Activated CD8-positive, alpha-beta T cell treated with anti-CD3 and anti-CD28 coated beads, Interleukin-2, amount 10 ng/mL, durations not matched to agents 7 days and 5 days (primary cell): ENCODE measurements at regions of chr11 and their contacts with region 1.

Region 1: GRCh38 chr11:76152086-76152681 is 54.1 kb downstream of the WNT11 start:
- DNase-seq: peak; percentile 88
- ATAC-seq: peak; percentile 95
- H3K4me3 Mint-ChIP-seq: peak overlapping the region; percentile 73
- H3K27ac Mint-ChIP-seq: peak overlapping the region; percentile 37
- H3K4me1 Mint-ChIP-seq: peaks cover 26% of the 10 kb centered on the region
- H3K27me3 Mint-ChIP-seq: peaks cover 7% of the 10 kb centered on the region

Region 2: DNA sequence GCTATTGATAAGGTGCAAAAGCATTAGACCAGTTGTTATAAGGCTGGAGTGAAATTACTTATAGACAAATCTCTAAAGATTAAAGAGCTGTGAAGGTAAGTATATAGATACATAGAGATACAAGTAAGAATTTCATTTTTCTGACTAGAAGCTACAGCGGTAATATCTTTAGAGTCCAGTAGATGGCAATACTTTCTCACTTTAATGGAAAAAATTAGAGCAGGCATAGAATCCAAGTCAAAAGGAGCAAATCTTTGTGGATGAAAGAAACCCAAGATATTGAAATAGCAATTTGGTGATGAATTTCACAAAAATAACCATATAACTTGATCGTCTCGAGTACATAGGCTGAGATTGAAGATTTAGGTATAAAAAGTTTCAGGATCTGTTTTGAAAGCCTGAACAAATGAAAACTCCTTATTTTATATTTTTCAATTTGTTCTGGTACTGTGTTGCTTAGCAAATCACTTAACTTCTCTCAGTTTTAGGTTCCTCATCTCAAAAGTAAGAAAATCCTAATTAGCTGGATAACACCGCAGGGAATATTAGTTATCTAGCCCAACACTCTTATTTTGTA is 255.3 kb before region 1 on chr11:
- CTCF ChIA-PET with region 1: interaction called, 148 read pairs
- POLR2A ChIA-PET with region 1: no interaction called
- DNase-seq: no peak
- ATAC-seq: no peak
- H3K4me3 Mint-ChIP-seq: no peak overlapping the region
- H3K27ac Mint-ChIP-seq: no peak overlapping the region
- H3K4me1 Mint-ChIP-seq: peaks cover 2% of the 10 kb centered on the region
- H3K27me3 Mint-ChIP-seq: no peaks in the 10 kb centered on the region

Region 3: DNA sequence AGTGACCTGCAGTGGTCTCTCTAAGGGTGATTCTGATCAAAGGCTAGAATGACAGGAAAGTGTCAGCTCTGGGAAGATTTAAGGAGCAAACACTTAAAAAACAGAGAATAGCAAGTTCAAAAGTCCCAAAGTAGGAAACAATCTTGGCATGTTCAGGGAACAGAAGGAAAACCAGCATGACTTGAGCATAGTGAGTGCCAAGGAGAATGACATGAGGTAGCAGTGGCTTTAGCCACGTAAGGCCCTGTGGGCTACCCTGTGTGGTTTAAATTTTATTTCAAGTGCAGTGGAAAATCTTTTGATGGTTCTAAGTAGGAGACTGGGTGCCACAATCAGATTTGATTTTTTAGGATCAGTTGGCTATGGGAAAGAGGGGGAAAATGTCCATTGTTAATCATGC is 95.3 kb before region 1 on chr11:
- CTCF ChIA-PET with region 1: no interaction called
- POLR2A ChIA-PET with region 1: no interaction called
- DNase-seq: no peak
- ATAC-seq: no peak
- H3K4me3 Mint-ChIP-seq: no peak overlapping the region
- H3K27ac Mint-ChIP-seq: no peak overlapping the region
- H3K4me1 Mint-ChIP-seq: peaks cover 7% of the 10 kb centered on the region
- H3K27me3 Mint-ChIP-seq: no peaks in the 10 kb centered on the region

Region 4: GRCh38 chr11:76120513-76121101 is 31.6 kb before region 1 on chr11:
- CTCF ChIA-PET with region 1: interaction called, 12 read pairs
- POLR2A ChIA-PET with region 1: no interaction called
- DNase-seq: no peak
- ATAC-seq: no peak
- H3K4me3 Mint-ChIP-seq: no peak overlapping the region
- H3K27ac Mint-ChIP-seq: no peak overlapping the region
- H3K4me1 Mint-ChIP-seq: no peaks in the 10 kb centered on the region
- H3K27me3 Mint-ChIP-seq: no peaks in the 10 kb centered on the region

Region 5: DNA sequence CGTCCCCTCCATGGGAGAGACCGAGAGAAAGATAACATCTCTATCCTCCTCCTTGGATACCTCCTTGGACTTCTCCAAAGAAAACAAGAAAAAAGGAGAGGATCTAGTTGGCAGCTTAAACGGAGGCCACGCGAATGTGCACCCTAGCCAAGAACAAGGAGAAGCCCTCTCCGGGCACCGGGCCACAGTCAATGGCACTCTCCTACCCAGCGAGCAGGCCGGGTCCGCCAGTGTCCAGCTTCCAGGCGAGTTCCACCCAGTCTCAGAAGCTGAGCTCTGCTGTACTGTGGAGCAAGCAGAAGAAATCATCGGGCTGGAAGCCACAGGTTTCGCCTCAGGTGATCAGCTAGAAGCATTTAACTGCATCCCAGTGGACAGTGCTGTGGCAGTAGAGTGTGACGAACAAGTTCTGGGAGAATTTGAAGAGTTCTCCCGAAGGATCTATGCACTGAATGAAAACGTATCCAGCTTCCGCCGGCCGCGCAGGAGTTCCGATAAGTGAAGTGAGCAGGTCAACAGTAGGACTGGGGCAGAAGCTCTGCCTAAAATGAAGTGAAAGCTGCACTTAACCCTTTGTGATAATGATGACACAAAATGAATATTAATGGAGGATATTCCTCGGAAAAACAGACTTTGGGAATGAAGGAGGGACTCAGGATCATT is 11.1 kb before region 1 on chr11:
- CTCF ChIA-PET with region 1: interaction called, 27 read pairs
- POLR2A ChIA-PET with region 1: no interaction called
- DNase-seq: no peak
- ATAC-seq: no peak
- H3K4me3 Mint-ChIP-seq: no peak overlapping the region
- H3K27ac Mint-ChIP-seq: no peak overlapping the region
- H3K4me1 Mint-ChIP-seq: no peaks in the 10 kb centered on the region
- H3K27me3 Mint-ChIP-seq: no peaks in the 10 kb centered on the region

Region 6: GRCh38 chr11:76166314-76166713 is 14.1 kb after region 1 on chr11:
- CTCF ChIA-PET with region 1: no interaction called
- POLR2A ChIA-PET with region 1: no interaction called
- DNase-seq: peak; percentile 41
- ATAC-seq: peak; percentile 34
- H3K4me3 Mint-ChIP-seq: no peak overlapping the region
- H3K27ac Mint-ChIP-seq: no peak overlapping the region
- H3K4me1 Mint-ChIP-seq: peaks cover 10% of the 10 kb centered on the region
- H3K27me3 Mint-ChIP-seq: no peaks in the 10 kb centered on the region

Region 7: DNA sequence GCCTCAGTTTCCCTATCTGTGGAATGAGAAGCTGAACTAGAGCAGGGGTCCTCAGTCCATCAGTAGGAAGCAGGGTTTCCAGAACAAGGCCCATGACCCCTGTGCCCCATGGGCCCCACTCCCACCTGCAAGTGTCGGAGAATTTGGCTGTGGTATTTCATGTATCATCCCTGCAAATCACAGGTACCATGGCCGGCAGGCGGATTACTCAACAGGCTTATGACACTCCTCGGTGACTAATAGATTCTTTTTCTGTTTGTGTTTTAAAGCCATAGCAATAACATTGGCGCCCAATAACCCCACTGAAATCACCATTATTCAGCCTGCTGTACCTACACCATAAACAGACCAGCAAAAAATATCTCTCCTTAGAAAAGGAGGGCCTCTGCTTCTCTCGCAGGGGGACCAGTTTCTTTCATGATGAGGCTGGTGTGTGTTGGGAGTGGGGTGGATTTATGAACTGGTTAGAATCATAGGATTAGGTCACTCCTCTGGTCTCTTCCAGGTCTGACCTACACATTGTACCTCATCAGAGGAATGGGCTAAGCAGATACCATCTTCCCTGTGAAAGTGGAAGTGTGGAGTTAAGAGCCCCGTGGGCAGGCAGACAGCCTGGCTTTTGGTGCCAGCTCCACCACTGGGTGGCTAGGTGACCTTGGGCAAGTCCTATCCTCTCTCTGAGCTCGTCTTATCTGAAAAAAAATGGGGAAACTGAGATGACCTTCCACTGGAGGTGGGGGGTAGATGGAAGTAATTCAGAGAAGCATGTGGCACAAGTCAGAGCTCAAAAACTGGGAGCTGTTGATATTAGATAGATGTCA is 114.3 kb after region 1 on chr11:
- CTCF ChIA-PET with region 1: no interaction called
- POLR2A ChIA-PET with region 1: no interaction called
- DNase-seq: no peak
- ATAC-seq: no peak
- H3K4me3 Mint-ChIP-seq: no peak overlapping the region
- H3K27ac Mint-ChIP-seq: no peak overlapping the region
- H3K4me1 Mint-ChIP-seq: no peaks in the 10 kb centered on the region
- H3K27me3 Mint-ChIP-seq: peaks cover 4% of the 10 kb centered on the region